A549 (cell line): ENCODE measurements at regions of chr13 and their contacts with region 1.

Region 1: DNA sequence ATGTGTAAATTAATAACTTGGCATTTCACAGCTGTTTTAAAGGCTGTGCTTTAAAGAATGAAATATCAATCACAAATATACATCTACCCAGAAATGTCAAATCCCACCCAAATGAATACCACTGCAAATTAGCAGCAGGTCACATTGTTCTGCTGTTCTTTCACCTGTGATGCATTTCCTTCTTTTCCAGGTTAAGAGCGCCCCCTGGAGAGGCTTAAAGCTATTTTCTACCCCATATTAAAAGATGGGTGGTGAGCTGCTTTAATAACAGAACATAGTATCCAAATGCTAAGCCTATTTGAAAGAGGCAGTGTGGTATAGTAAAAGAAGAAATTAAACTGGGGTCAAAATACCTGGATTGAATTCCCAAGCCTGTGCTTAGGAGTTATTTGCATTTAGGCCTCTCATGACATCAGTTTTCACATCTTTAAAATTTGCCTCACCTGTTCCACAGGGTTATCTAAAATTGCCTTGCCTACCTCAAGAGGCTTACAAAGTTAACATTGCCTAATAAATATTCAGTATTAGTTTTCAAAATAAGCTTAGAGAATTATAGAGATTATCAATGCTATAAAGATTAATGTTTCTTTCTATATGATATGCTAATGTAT is 396.9 kb upstream of the SLITRK5 start:
- DNase-seq: peak in 1 of 2 experiments; percentile 42
- ATAC-seq: peak; percentile 50 to 74; a peak in 4 of 6 replicates
- H3K4me3 ChIP-seq: no peak overlapping the region
- H3K27ac ChIP-seq: no peak overlapping the region
- H3K4me1 ChIP-seq: no peaks in the 10 kb centered on the region
- CTCF ChIP-seq: peak; percentile 55
- EP300 ChIP-seq: no peak
- POLR2A ChIP-seq: no peak
- RAD21 ChIP-seq: peak; percentile 57 to 64

Region 2: GRCh38 chr13:86313421-86313820 is 960.9 kb before region 1 on chr13:
- CTCF ChIA-PET with region 1: no interaction called
- POLR2A ChIA-PET with region 1: no interaction called
- DNase-seq: no peak
- ATAC-seq: no peak
- H3K4me3 ChIP-seq: no peak overlapping the region
- H3K27ac ChIP-seq: no peak overlapping the region
- H3K4me1 ChIP-seq: no peaks in the 10 kb centered on the region
- CTCF ChIP-seq: no peak
- EP300 ChIP-seq: no peak
- POLR2A ChIP-seq: no peak
- RAD21 ChIP-seq: no peak

Region 3: DNA sequence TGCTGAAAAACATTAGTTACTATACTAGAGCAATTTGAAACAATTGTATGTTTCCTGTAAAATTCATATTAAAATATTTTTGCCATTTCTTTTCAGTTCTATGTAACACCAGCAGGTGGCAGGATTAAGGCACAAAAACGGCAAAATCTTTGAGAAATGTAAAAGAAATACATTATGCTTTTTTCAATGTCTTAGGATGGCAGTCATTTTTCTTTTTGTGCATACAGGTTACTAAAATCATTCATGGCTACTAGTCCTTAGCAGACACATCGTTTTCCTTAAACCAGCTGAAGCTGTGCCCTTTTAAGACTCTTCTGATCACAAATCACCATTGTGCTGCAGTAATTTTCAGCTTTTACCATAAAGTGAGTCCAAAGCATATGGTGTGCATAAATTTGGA is 403.9 kb before region 1 on chr13:
- CTCF ChIA-PET with region 1: interaction called, 11 read pairs
- POLR2A ChIA-PET with region 1: no interaction called
- DNase-seq: peak in 1 of 2 experiments; percentile 1
- ATAC-seq: no peak
- H3K4me3 ChIP-seq: no peak overlapping the region
- H3K27ac ChIP-seq: no peak overlapping the region
- H3K4me1 ChIP-seq: no peaks in the 10 kb centered on the region
- CTCF ChIP-seq: peak; percentile 45
- EP300 ChIP-seq: no peak
- POLR2A ChIP-seq: no peak
- RAD21 ChIP-seq: peak; percentile 47 to 57

Region 4: GRCh38 chr13:86960876-86961275 is 313.4 kb before region 1 on chr13:
- CTCF ChIA-PET with region 1: no interaction called
- POLR2A ChIA-PET with region 1: no interaction called
- DNase-seq: no peak
- ATAC-seq: no peak
- H3K4me3 ChIP-seq: no peak overlapping the region
- H3K27ac ChIP-seq: no peak overlapping the region
- H3K4me1 ChIP-seq: no peaks in the 10 kb centered on the region
- CTCF ChIP-seq: no peak
- EP300 ChIP-seq: no peak
- POLR2A ChIP-seq: no peak
- RAD21 ChIP-seq: no peak

Region 5: DNA sequence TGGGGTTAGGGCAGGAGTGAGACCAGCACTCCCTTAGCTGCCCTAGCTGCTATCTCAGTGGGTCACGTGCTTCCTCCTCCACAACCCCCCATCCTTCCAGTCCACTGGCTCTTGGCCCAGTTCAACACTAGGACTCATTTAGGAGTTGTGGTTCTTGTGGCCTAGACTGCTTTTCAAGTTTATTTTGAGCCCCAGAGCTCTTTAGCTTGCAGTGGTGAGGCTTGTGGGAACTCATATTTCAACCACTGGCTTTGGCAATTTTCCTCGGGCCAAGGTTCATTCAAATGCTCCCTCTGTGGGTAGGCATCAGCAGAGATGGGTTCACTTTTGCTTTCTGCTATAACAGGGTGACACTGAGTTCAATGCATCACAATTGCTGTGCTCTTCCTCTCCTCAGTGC is 39.3 kb before region 1 on chr13:
- CTCF ChIA-PET with region 1: no interaction called
- POLR2A ChIA-PET with region 1: no interaction called
- DNase-seq: no peak
- ATAC-seq: no peak
- H3K4me3 ChIP-seq: no peak overlapping the region
- H3K27ac ChIP-seq: no peak overlapping the region
- H3K4me1 ChIP-seq: no peaks in the 10 kb centered on the region
- CTCF ChIP-seq: no peak
- EP300 ChIP-seq: no peak
- POLR2A ChIP-seq: no peak
- RAD21 ChIP-seq: no peak